ENCODE measurements at regions of chr1 and their contacts with region 1.

Region 1: DNA sequence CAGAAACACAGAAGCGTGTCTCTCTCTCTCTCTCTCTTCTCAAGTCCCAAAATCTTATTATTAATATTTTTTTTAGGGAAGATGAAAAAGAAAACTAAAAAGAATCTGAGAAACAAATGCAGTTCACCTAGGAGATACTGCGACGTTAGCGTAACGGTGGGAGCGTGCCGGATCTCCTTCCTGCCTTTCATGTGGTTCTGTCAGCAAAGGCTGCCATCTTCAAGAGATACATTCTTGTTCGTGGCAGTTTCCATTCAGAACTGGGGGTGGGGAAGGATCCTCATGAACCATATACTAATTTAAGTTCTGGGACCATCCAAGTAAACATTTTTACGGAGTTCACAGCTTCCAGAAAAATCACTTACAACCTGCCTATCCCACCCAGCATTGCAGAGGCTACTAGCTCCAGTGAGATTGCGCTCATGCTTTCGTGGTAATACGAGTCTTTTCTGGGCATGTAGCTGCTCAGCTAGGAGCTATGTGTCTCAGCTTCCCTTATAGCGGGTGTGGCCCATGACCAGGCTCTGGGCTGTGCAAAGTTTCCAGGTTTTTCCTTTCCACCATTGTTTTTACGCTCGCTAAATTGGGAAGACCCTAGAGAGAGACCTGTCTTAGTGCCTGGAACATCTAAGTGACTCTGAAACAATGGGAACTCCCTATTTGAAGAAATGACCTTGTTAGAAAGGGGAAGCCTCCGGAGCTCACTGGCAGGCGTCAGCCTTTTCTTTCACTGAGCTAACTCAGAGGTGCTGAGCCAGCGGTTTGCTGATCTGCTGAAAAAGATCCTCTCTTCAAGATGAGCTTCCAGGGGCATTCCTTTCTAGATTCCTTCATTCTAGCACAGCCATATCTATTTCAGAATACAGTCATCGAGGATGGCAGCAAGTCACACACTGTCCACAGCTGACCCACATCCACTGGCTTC is 17.3 kb downstream of the SLAMF1 start:
- DNase-seq: no peak
- H3K4me3 ChIP-seq: no peak overlapping the region
- H3K4me3 Mint-ChIP-seq: no peak overlapping the region
- H3K27ac Mint-ChIP-seq: no peak overlapping the region
- H3K4me1 ChIP-seq: peaks cover 35% of the 10 kb centered on the region
- H3K4me1 Mint-ChIP-seq: peaks cover 18% of the 10 kb centered on the region
- H3K27me3 ChIP-seq: no peaks in the 10 kb centered on the region
- H3K27me3 Mint-ChIP-seq: no peaks in the 10 kb centered on the region
- CTCF ChIP-seq: no peak

Region 2: DNA sequence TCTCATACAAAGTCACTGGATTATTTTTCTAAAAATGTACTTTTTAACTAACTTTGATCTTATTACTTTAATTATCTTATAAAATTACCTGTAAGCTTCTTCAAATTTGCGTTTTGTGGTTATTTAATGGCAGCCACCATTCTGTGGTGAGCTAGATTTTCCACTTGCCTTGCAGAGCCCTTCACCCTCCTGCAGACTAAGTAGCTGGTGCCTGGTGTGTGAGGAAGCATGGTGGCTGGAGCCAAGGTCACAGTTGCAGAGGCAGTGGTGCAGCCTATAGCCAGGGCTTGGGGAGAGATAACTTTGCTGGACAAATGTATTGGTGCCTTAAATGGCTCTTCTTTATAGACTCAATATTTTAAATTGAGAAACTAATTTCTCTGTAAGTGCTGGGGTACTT is 39.1 kb before region 1 on chr1:
- CTCF ChIA-PET with region 1: no interaction called
- POLR2A ChIA-PET with region 1: no interaction called
- intact Hi-C with region 1: no loop called
- DNase-seq: no peak
- H3K4me3 ChIP-seq: no peak overlapping the region
- H3K4me3 Mint-ChIP-seq: no peak overlapping the region
- H3K27ac Mint-ChIP-seq: no peak overlapping the region
- H3K4me1 ChIP-seq: no peaks in the 10 kb centered on the region
- H3K4me1 Mint-ChIP-seq: no peaks in the 10 kb centered on the region
- H3K27me3 ChIP-seq: no peaks in the 10 kb centered on the region
- H3K27me3 Mint-ChIP-seq: peaks cover 9% of the 10 kb centered on the region
- CTCF ChIP-seq: no peak

Region 3: DNA sequence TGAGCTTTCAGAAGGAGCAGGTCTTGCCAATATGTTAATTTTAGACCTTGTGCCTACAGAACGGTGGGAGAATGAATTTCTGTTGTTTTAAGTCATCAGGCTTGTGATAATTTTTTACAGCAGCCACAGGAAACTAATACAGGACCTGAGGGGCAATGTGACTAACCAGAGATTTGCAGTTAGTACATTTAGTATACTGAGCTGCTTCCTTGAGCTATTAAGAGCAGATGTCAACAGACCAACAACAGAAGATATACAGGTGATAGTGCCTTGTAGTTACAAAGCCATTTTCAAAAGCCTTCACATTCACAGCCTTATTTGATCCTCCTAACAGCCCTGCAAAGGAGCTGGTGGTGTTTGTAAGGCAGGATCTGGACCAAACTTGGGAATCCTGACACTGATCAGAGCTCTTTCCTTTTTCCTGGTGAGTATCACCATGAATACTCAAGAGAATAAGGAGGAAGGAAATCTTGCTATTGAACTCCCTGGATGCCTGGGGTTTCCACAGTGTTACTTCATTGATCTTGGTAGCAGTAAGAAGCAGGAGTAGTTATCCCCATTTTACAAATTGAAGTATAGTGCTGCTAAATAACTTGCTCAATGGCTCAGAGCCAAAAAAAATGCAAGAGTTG is 22.0 kb after region 1 on chr1:
- CTCF ChIA-PET with region 1: no interaction called
- POLR2A ChIA-PET with region 1: no interaction called
- intact Hi-C with region 1: loop called (anchors 1 kb)
- DNase-seq: no peak
- H3K4me3 ChIP-seq: no peak overlapping the region
- H3K4me3 Mint-ChIP-seq: no peak overlapping the region
- H3K27ac Mint-ChIP-seq: peak overlapping the region; percentile 82
- H3K4me1 ChIP-seq: peaks cover 42% of the 10 kb centered on the region
- H3K4me1 Mint-ChIP-seq: peaks cover 31% of the 10 kb centered on the region
- H3K27me3 ChIP-seq: no peaks in the 10 kb centered on the region
- H3K27me3 Mint-ChIP-seq: no peaks in the 10 kb centered on the region
- CTCF ChIP-seq: no peak

Region 4: DNA sequence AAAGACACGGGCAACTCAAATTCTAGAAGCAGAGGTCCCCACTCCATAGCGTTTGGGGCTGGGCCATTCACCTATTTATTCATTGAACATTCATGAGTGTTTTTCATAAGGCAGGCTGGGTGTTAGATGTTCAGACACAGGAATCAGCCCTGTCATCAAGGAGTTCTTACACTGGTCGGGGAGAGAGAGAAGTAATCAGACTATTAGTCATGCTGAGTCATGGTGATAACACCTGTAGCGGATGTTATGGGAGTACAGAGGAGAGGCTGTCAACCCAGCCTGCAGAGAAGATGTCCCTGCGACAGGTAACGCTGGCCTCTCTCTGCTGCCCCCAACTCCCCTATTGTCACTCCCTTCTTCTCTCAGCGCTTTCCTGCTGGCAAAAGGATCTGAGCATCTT is 183.7 kb after region 1 on chr1:
- CTCF ChIA-PET with region 1: no interaction called
- POLR2A ChIA-PET with region 1: no interaction called
- intact Hi-C with region 1: no loop called
- DNase-seq: peak in 1 of 2 experiments; percentile 12
- H3K4me3 ChIP-seq: no peak overlapping the region
- H3K4me3 Mint-ChIP-seq: no peak overlapping the region
- H3K27ac Mint-ChIP-seq: peak overlapping the region; percentile 11
- H3K4me1 ChIP-seq: peaks cover 31% of the 10 kb centered on the region
- H3K4me1 Mint-ChIP-seq: peaks cover 35% of the 10 kb centered on the region
- H3K27me3 ChIP-seq: no peaks in the 10 kb centered on the region
- H3K27me3 Mint-ChIP-seq: no peaks in the 10 kb centered on the region
- CTCF ChIP-seq: no peak

Measured in Caco-2 (cell line).